Endothelial cell of umbilical vein (primary cell): ENCODE measurements at regions of chr16 and their contacts with region 1.

Region 1: DNA sequence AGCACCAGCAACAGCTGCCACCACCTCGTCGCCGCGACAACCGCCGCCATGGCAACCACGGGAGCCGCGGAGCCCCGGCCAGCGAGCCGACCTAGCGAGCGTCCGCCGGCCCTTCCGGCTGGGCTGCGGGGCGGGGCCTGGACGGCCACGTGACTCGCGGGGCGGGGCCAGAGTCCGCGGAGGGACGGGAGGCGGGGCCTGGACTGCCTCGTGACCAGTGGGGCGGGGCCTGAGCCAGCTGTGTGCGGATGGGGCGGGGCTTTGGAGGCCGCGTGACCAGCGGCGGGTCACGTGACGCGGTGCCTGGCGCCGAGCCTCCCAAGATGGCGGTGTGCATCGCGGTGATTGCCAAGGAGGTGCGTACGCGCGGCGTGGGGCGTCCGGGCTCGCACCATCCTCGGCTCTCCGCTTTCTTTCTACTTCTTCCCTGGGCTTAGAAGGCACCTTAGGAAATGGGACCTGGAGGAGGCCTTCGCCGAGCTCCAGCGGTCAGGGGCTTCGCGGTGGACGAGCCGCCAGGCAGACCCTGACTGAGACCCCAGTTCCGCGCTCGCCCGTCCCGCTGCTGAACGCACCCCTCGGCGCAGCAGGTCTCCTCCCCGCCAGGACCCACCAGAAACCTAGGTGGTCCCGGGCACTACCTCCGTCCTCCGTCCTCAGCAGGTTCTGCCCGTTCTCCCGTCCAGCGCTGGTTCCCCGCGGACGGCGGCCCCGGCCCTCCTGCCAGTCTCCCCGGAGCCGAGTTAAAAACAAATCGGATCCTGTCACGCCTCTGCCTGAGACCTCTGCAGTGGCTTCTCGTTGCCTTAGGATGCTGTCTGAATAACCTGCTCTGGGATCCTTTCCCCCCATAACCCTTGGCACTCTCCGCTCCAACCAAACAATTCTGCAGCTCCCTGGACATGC is at the starts of genes GALNS and TRAPPC2L:
- DNase-seq: peak; percentile 96
- H3K4me3 ChIP-seq: peak within 1 kb of the TSS; percentile 45 to 100 (median 72)
- H3K27ac ChIP-seq: peak within 1 kb of the TSS; percentile 1
- H3K4me1 ChIP-seq: peaks cover 4% of the 10 kb centered on the region
- H3K27me3 ChIP-seq: no peaks in the 10 kb centered on the region
- CTCF ChIP-seq: no peak
- POLR2A ChIP-seq: peak; percentile 90
- total RNA-seq, gene GALNS: 32.5 and 40.2 TPM in 2 replicates
- total RNA-seq, gene TRAPPC2L: 61.9 and 80.0 TPM in 2 replicates

Region 2: GRCh38 chr16:88811769-88812512 is 45.1 kb before region 1 on chr16 and contains the start of gene APRT:
- CTCF ChIA-PET with region 1: interaction called, 50 read pairs
- POLR2A ChIA-PET with region 1: no interaction called
- dilution Hi-C with region 1: no loop called
- intact Hi-C with region 1: loop called (anchors 1 kb)
- DNase-seq: peak; percentile 94
- H3K4me3 ChIP-seq: peak within 1 kb of the TSS; percentile 42 to 54 (median 52)
- H3K27ac ChIP-seq: peak within 1 kb of the TSS; percentile 49
- H3K4me1 ChIP-seq: peaks cover 17% of the 10 kb centered on the region
- H3K27me3 ChIP-seq: no peaks in the 10 kb centered on the region
- CTCF ChIP-seq: peak; percentile 16 to 37
- POLR2A ChIP-seq: peak; percentile 97
- total RNA-seq, gene APRT: 148 and 152 TPM in 2 replicates

Region 3: DNA sequence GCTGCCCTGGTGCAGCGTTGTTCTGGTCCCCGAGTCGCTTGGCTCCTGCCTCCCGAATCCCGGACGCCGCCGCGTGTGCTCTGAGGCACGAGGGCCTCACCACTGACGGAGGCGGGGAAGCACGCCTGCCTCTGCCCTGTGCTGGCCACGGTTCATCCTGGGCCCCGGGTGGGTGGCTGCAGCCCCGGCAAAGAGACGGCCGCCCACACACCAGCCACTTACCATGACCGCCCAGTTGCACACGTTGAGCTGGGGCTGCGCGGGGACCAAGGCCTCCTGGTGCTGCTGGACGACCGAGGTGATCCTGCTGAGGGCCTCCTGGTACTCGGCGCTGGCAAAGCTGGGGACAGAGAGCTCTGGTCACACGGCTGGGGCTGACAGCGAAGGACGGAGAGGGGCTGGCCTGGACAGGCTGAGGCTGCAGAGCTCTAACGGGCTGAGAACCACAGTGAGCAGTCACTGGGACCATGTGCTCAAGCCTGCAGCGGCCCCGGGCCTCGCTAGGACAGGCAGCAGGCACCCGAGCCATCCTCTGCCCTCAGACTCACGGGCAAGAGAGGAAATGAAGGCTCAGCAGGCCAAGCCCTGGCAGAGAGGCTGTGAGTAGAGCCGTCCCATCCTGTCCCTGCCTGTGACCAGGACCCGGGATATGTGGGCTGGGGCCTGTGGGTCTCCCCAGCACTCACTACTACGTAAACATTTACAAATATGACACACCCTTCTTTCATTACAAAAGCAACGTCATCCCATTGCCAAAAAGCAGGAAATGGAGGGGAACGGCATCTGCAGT is 39.1 kb before region 1 on chr16:
- CTCF ChIA-PET with region 1: interaction called, 50 read pairs
- POLR2A ChIA-PET with region 1: no interaction called
- dilution Hi-C with region 1: no loop called
- intact Hi-C with region 1: loop called (anchors 1 kb)
- DNase-seq: no peak
- H3K4me3 ChIP-seq: no peak overlapping the region
- H3K27ac ChIP-seq: no peak overlapping the region
- H3K4me1 ChIP-seq: no peaks in the 10 kb centered on the region
- H3K27me3 ChIP-seq: no peaks in the 10 kb centered on the region
- CTCF ChIP-seq: no peak
- POLR2A ChIP-seq: no peak

Region 4: DNA sequence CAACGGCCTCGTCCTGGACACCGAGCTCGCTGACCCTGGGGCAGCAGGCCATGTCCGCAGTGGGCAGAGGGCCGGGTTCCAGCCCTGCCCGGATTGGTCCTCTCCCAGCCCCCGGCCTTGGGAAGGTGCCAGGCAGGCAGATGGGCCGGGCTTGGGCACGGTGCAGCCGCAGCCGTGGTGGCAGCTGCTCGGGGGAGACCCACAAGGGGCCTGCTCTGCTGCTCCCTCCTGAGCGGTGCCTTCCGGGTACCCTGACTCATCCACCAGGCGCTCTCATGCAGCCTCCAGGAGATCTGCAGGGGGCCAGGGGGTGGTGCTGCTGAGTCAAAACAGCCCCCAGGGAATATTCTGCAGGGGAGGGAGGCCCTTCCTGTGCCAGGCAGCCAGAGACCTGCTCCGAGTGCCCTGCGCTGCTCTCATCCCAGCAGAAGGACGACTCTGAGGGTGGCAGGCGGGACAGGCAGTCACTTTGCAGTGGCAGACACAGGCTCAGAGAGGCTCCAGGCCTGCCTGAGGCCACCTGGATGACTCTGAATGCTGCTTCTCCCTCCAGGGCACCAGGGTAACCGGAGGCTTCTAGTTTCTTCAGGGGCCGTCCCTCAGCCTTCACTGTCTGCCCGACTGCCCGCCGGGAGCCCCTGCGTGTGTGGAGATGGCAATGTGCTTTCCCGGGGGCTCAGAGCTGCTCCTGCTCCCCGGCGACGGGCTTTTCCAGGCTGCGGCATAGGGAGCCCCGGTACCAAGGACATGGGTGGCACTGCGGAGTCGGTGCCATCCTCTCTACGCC is 68.2 kb after region 1 on chr16:
- CTCF ChIA-PET with region 1: interaction called, 7 read pairs
- POLR2A ChIA-PET with region 1: no interaction called
- dilution Hi-C with region 1: no loop called
- intact Hi-C with region 1: loop called (anchors 1 kb)
- DNase-seq: peak; percentile 67
- H3K4me3 ChIP-seq: no peak overlapping the region
- H3K27ac ChIP-seq: no peak overlapping the region
- H3K4me1 ChIP-seq: peaks cover 27% of the 10 kb centered on the region
- H3K27me3 ChIP-seq: no peaks in the 10 kb centered on the region
- CTCF ChIP-seq: peak; percentile 62 to 64
- POLR2A ChIP-seq: peak; percentile 24